ENCODE measurements at regions of chr2 and their contacts with region 1.

Region 1: GRCh38 chr2:65340898-65341681 is 91.3 kb downstream of the SPRED2 start:
- DNase-seq: no peak
- ATAC-seq: peak; percentile 56
- H3K4me3 ChIP-seq: no peak overlapping the region
- H3K27ac ChIP-seq: no peak overlapping the region
- H3K4me1 ChIP-seq: peaks cover 3% of the 10 kb centered on the region; the same call in 1 of the 2 replicates
- H3K27me3 ChIP-seq: no peaks in the 10 kb centered on the region
- CTCF ChIP-seq: no peak

Region 2: DNA sequence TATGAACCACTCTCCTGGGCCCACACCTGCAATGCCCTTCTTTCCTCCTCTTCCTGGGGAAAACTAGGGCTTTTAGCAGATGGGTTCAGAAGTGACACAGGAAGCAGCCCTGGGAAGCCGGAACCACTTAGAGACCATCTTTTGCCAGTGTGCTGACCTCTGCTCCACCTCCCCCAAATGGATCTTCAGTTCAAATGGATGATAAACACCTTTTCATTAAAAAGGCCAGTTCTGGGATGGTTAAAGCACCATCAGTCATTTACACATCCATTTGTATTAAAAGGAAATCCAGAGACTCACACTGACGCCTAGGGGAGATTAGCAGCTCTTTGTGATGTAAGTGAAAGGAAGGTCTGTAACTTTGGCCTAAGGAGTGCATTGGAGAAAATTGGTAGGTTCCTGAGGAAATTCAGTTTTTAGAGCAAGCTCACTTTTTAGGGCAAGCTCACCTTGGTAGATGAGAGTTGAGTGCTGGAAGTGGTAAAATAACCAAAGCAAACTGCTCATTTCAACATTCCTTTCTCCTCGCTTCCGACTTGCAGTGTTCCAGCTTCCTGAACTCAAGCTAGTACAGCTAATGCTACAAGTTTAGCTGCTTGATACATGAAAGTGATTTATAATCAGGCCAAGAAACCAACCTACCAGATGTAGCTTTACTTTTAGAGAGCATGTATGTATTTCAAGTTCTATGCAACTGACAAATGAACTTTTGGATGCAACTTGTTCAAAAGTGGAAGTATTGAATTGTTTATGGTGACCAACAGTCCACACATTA is 65.8 kb before region 1 on chr2:
- CTCF ChIA-PET with region 1: no interaction called
- POLR2A ChIA-PET with region 1: interaction called, 10 read pairs
- in situ Hi-C with region 1: no loop called
- intact Hi-C with region 1: no loop called
- DNase-seq: no peak
- ATAC-seq: no peak
- H3K4me3 ChIP-seq: no peak overlapping the region
- H3K27ac ChIP-seq: no peak overlapping the region
- H3K4me1 ChIP-seq: peaks cover 8% of the 10 kb centered on the region; the same call in 1 of the 2 replicates
- H3K27me3 ChIP-seq: no peaks in the 10 kb centered on the region
- CTCF ChIP-seq: no peak

Measured in Panc1 (cell line).